Dorsolateral prefrontal cortex (tissue), 120 donors: ENCODE measurements at regions of chr4 and their contacts with region 1.

Region 1: DNA sequence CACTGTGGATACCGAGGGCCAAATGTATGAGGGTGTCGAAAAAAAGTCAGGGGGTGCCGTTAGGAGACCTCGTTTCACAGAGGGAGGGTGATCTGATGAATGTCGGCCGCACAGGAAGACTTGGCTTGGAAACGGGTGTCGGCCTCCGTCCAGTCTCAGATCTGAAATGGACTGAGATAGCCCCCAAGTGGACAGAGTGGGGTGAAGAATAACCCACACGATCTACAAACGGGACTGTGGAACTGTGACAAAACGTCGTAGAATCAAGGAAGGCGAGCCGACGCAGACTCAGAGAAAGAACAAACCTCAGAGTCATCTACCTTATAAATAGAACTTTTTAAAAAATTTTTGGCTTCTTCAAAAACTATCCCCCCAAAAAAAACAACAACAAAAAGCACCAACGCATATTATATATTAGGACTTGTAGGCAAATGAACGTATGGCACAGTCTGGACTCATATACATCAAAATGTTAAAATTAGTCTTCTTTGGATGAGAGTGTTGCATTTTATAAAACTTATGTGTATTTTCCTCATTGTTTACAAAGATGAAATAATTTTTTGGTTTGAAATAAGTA is 63.8 kb upstream of the IRF2 start:
- DNase-seq: peak; percentile 61 to 93 (median 87)
- H3K4me3 ChIP-seq: peak overlapping the region; percentile 51 to 97 (median 82)
- H3K27ac ChIP-seq: peak overlapping the region; percentile 76 to 99 (median 96)
- H3K27me3 ChIP-seq: no peaks in the 10 kb centered on the region
- CTCF ChIP-seq: peak; percentile 23 to 89 (median 80)

Region 2: DNA sequence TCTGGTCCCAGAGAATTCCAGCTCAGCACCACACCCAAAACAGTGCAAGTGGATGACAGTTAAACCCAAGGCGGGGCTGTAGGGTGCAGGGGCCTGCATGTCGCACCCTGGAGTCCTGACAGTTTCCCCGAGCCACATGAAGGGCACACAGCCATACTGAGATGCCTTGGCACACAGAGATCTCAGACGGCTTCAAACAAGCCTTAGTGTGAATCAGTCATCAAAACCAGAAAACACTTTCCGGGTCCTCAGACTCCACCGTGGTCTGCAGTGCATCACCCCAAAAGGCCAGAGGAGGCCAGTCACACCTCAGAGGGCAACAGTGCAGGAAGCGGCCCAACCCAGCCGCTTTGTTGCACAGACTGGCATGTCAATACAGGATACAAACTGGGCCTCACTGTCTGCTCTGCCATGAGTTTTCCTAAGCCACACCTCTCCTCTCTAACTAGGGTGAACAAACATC is 255.8 kb before region 1 on chr4:
- intact Hi-C with region 1: loop called (anchors 5 kb)
- DNase-seq: no peak
- H3K4me3 ChIP-seq: no peak overlapping the region
- H3K27ac ChIP-seq: peak overlapping the region in 52 of 59 donors; percentile 6 to 94 (median 85)
- H3K27me3 ChIP-seq: no peaks in the 10 kb centered on the region
- CTCF ChIP-seq: peak in 1 of 56 donors; percentile 5

Region 3: DNA sequence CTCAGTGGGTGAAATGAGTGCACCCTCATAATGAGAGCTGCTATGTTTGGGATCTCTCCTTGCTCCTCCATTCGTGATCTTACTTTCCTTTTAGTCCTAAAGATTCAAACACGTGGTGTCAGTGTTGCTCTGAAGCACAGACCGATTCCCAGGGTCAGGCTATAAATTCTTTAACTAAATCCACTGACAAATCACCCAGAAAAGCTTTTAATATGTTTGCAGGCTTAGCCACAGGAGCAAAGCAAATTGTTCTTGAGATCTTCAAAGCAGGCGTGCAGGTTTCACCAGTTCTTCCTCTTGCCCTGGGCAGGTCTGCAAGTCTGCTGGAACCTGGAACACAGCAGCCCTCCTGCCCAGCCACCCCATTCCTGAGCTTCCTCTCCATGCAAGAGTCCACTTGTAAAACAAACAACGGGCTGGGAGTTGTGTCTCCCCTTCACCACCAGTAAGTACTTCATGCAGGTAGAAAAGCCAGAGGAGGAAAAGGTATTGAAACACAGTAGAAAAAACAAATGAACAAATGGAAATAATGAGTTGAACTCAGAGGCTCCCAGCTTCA is 250.3 kb before region 1 on chr4:
- intact Hi-C with region 1: loop called (anchors 5 kb)
- DNase-seq: no peak
- H3K4me3 ChIP-seq: peak overlapping the region in 6 of 59 donors; percentile 3 to 16 (median 8)
- H3K27ac ChIP-seq: peak overlapping the region in 16 of 59 donors; percentile 0 to 91 (median 18)
- H3K27me3 ChIP-seq: no peaks in the 10 kb centered on the region
- CTCF ChIP-seq: peak in 49 of 56 donors; percentile 12 to 67 (median 38)

Region 4: DNA sequence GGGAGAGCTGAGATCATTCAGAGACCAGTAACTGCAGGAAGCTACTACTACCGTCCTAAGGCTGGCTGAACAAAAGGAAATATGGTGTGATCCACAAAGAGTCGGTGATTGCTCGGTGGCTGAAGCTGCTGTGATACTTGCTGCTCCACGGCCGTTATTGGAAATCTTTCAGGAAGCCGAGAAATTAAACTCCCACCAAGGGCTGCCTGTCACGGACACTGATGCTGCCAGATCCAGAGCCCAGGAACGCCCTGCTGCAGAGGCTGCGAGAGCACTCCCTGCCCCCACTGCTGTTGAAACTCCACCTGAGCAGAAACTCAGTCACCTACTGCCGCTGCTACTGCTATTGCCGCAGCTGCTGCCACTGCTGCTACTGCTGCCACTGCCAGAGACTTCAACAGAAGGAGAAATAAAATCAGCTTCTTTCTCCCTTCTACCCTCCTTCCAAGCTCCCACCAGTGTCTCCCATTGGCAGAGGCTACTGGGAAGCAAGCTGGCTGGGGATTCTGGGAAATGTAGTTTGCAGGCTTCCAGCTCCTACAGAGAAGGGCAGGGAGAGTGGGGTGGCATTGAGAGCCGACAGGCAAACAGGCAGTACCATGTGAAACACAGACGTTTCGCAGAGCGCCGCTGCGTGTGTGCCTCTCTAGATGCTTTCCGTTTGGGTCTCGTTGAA is 194.5 kb before region 1 on chr4:
- intact Hi-C with region 1: loop called in 1 of 2 experiments (anchors 5 kb)
- DNase-seq: peak; percentile 37 to 89 (median 82)
- H3K4me3 ChIP-seq: peak overlapping the region; percentile 51 to 94 (median 72)
- H3K27ac ChIP-seq: peak overlapping the region in 57 of 59 donors; percentile 5 to 89 (median 75)
- H3K27me3 ChIP-seq: no peaks in the 10 kb centered on the region
- CTCF ChIP-seq: peak in 9 of 56 donors; percentile 13 to 24 (median 18)

Region 5: GRCh38 chr4:184649026-184649970 is 111.2 kb after region 1 on chr4 and contains the starts of genes CASP3 and PRIMPOL:
- intact Hi-C with region 1: loop called (anchors 2 to 5 kb)
- DNase-seq: peak; percentile 93 to 99 (median 96)
- H3K4me3 ChIP-seq: peak within 1 kb of the TSS; percentile 60 to 97 (median 89)
- H3K27ac ChIP-seq: peak within 1 kb of the TSS; percentile 55 to 98 (median 94)
- H3K27me3 ChIP-seq: no peaks in the 10 kb centered on the region
- CTCF ChIP-seq: peak in 51 of 56 donors; percentile 14 to 67 (median 44)
- total RNA-seq, gene CASP3: 6.4 to 17.2 (median 12.2) TPM
- total RNA-seq, gene PRIMPOL: 9.5 to 30.5 (median 17.5) TPM